Right ventricle myocardium inferior (tissue), 1 donor: ENCODE measurements at regions of chr11 and their contacts with region 1.

Region 1: GRCh38 chr11:79762279-79762921 is 321.6 kb upstream of the TENM4 start:
- DNase-seq: no peak
- ATAC-seq: peak; percentile 42

Region 2: DNA sequence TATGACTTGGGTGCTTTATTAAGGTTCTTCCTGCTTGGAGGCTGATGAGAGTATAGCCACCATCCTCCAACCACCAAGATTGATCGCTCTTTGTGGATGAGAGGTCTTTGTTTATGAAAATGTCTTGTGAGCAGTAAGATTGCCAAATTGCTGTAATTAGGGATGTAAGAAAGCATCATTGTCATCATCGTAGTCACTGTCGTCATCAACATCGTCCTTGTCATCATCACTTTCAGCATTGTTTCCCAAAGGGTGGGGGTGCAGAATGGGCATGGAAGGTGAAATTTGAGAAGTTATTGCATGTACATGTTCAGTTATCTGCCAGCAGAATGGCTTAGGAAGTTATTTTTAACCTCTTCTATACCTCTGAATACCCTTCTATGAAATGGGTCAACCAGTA is 117.9 kb after region 1 on chr11:
- intact Hi-C with region 1: no loop called
- DNase-seq: no peak
- ATAC-seq: no peak

Region 3: DNA sequence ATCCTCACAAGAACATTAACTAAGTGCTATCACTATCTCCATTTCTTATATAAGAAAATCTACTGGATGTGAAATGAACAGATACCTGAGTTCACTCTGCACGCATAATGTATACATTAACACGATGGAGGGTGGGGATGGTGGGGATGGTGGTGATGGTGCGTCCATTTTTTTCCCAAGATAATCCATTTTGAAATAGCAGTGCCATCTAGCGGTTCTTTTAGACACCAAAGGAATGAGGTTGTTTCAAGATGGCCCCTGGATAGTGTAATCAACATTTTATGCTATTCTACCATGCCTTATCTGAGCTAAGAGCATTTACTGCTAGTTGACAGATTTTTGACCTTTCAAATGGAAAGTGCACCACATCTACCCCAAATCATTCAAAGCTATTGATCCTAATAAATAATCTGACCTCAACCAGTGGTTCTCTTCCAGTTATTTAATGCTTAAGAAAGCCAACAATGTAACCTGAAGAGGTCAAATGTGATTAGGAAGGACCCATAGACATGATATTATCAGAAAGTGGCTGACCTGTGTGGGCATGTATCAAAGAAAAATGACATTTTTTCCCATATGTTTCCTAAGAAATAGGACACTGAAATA is 393.1 kb after region 1 on chr11:
- intact Hi-C with region 1: loop called (anchors 2 kb)
- DNase-seq: no peak
- ATAC-seq: no peak